ENCODE measurements at regions of chr18 and their contacts with region 1.

Region 1: GRCh38 chr18:46660955-46661749 is 4.1 kb upstream of the LOXHD1 start:
- DNase-seq: no peak
- H3K4me3 ChIP-seq: no peak overlapping the region
- H3K4me3 Mint-ChIP-seq: no peak overlapping the region
- H3K27ac ChIP-seq: no peak overlapping the region
- H3K27ac Mint-ChIP-seq: no peak overlapping the region
- H3K4me1 ChIP-seq: no peaks in the 10 kb centered on the region
- H3K4me1 Mint-ChIP-seq: no peaks in the 10 kb centered on the region
- H3K27me3 ChIP-seq: no peaks in the 10 kb centered on the region
- H3K27me3 Mint-ChIP-seq: peaks cover 0 to 3% of the 10 kb centered on the region in 2 donors

Region 2: GRCh38 chr18:46148810-46149209 is 512.3 kb before region 1 on chr18:
- CTCF ChIA-PET with region 1: interaction called, 190 read pairs
- POLR2A ChIA-PET with region 1: interaction called, 5 read pairs
- intact Hi-C with region 1: no loop called
- DNase-seq: peak; percentile 50 to 64 (median 55)
- H3K4me3 ChIP-seq: no peak overlapping the region
- H3K4me3 Mint-ChIP-seq: peak overlapping the region in 4 of 8 donors; percentile 5 to 53 (median 17)
- H3K27ac ChIP-seq: no peak overlapping the region
- H3K27ac Mint-ChIP-seq: peak overlapping the region in 6 of 7 donors; percentile 21 to 86 (median 68)
- H3K4me1 ChIP-seq: peaks cover 47% of the 10 kb centered on the region
- H3K4me1 Mint-ChIP-seq: peaks cover 21 to 44% (median 34%) of the 10 kb centered on the region in 4 donors
- H3K27me3 ChIP-seq: no peaks in the 10 kb centered on the region
- H3K27me3 Mint-ChIP-seq: no peaks in the 10 kb centered on the region

Region 3: GRCh38 chr18:46166261-46166970 is 494.7 kb before region 1 on chr18:
- CTCF ChIA-PET with region 1: interaction called, 74 read pairs
- POLR2A ChIA-PET with region 1: no interaction called
- intact Hi-C with region 1: no loop called
- DNase-seq: no peak
- H3K4me3 ChIP-seq: no peak overlapping the region
- H3K4me3 Mint-ChIP-seq: peak overlapping the region in 1 of 8 donors; percentile 2
- H3K27ac ChIP-seq: no peak overlapping the region
- H3K27ac Mint-ChIP-seq: peak overlapping the region in 3 of 7 donors; percentile 26 to 59 (median 37)
- H3K4me1 ChIP-seq: peaks cover 6% of the 10 kb centered on the region
- H3K4me1 Mint-ChIP-seq: peaks cover 11 to 37% (median 20%) of the 10 kb centered on the region in 4 donors
- H3K27me3 ChIP-seq: no peaks in the 10 kb centered on the region
- H3K27me3 Mint-ChIP-seq: no peaks in the 10 kb centered on the region

Region 4: GRCh38 chr18:46481048-46481846 is 179.9 kb before region 1 on chr18:
- CTCF ChIA-PET with region 1: interaction called, 3 read pairs
- POLR2A ChIA-PET with region 1: no interaction called
- intact Hi-C with region 1: loop called (anchors 1 kb)
- DNase-seq: peak in 4 of 5 donors; percentile 36 to 52 (median 44)
- H3K4me3 ChIP-seq: no peak overlapping the region
- H3K4me3 Mint-ChIP-seq: no peak overlapping the region
- H3K27ac ChIP-seq: no peak overlapping the region
- H3K27ac Mint-ChIP-seq: no peak overlapping the region
- H3K4me1 ChIP-seq: no peaks in the 10 kb centered on the region
- H3K4me1 Mint-ChIP-seq: peaks cover 0 to 6% (median 2%) of the 10 kb centered on the region in 4 donors
- H3K27me3 ChIP-seq: no peaks in the 10 kb centered on the region
- H3K27me3 Mint-ChIP-seq: peaks cover 8 to 12% of the 10 kb centered on the region in 2 donors

Region 5: GRCh38 chr18:46649071-46649862 is 11.9 kb before region 1 on chr18:
- CTCF ChIA-PET with region 1: interaction called, 25 read pairs
- POLR2A ChIA-PET with region 1: no interaction called
- intact Hi-C with region 1: no loop called
- DNase-seq: no peak
- H3K4me3 ChIP-seq: no peak overlapping the region
- H3K4me3 Mint-ChIP-seq: no peak overlapping the region
- H3K27ac ChIP-seq: no peak overlapping the region
- H3K27ac Mint-ChIP-seq: no peak overlapping the region
- H3K4me1 ChIP-seq: no peaks in the 10 kb centered on the region
- H3K4me1 Mint-ChIP-seq: no peaks in the 10 kb centered on the region
- H3K27me3 ChIP-seq: no peaks in the 10 kb centered on the region
- H3K27me3 Mint-ChIP-seq: peaks cover 2 to 4% of the 10 kb centered on the region in 2 donors

Measured in CD4-positive, alpha-beta memory T cell (primary cell).